ENCODE measurements at regions of chr16 and their contacts with region 1.

Region 1: DNA sequence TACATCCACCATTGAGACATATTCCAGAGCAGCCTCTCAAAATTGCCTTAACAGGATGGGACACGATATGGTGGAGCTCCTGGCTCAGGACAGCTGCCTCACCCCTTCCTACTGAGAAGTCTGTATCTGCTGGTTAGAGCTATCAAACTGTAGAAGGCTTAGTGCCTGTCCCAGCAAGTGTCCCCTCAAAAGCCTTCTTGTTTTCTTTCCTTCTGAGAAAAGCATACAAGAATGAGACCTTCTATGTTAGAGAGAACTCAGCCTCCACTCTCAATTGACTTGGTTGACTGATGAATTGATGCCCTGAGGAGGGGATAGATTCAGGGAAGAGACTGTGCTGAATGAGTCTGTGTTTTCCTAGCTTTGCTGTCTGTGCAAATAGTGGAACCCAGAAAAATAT is 2020.9 kb downstream of the TP53TG3F start:
- DNase-seq: no peak
- ATAC-seq: no peak
- H3K4me3 ChIP-seq: no peak overlapping the region
- H3K27ac ChIP-seq: no peak overlapping the region
- H3K4me1 ChIP-seq: no peaks in the 10 kb centered on the region
- H3K27me3 ChIP-seq: no peaks in the 10 kb centered on the region
- CTCF ChIP-seq: no peak
- EP300 ChIP-seq: no peak
- POLR2A ChIP-seq: no peak
- RAD21 ChIP-seq: no peak

Region 2: GRCh38 chr16:35431829-35432663 is 48.3 kb before region 1 on chr16:
- CTCF ChIA-PET with region 1: no interaction called
- POLR2A ChIA-PET with region 1: no interaction called
- RAD21 ChIA-PET with region 1: no interaction called
- SMC1A ChIA-PET with region 1: no interaction called
- in situ Hi-C with region 1: loop called (anchors 5 kb)
- intact Hi-C with region 1: no loop called
- DNase-seq: no peak
- ATAC-seq: no peak
- H3K4me3 ChIP-seq: no peak overlapping the region
- H3K27ac ChIP-seq: no peak overlapping the region
- H3K4me1 ChIP-seq: no peaks in the 10 kb centered on the region
- H3K27me3 ChIP-seq: no peaks in the 10 kb centered on the region
- CTCF ChIP-seq: peak; percentile 38 to 76 (median 62)
- EP300 ChIP-seq: no peak
- POLR2A ChIP-seq: no peak
- RAD21 ChIP-seq: peak; percentile 37

Measured in GM12878 (cell line).